ENCODE measurements at regions of chr5 and their contacts with region 1.

Region 1: GRCh38 chr5:40486437-40487275 is 193.1 kb upstream of the PTGER4 start:
- DNase-seq: peak; percentile 89
- H3K4me3 Mint-ChIP-seq: peak overlapping the region; percentile 45
- H3K27ac Mint-ChIP-seq: peak overlapping the region; percentile 89
- H3K4me1 Mint-ChIP-seq: peaks cover 55% of the 10 kb centered on the region
- H3K27me3 Mint-ChIP-seq: no peaks in the 10 kb centered on the region

Region 2: DNA sequence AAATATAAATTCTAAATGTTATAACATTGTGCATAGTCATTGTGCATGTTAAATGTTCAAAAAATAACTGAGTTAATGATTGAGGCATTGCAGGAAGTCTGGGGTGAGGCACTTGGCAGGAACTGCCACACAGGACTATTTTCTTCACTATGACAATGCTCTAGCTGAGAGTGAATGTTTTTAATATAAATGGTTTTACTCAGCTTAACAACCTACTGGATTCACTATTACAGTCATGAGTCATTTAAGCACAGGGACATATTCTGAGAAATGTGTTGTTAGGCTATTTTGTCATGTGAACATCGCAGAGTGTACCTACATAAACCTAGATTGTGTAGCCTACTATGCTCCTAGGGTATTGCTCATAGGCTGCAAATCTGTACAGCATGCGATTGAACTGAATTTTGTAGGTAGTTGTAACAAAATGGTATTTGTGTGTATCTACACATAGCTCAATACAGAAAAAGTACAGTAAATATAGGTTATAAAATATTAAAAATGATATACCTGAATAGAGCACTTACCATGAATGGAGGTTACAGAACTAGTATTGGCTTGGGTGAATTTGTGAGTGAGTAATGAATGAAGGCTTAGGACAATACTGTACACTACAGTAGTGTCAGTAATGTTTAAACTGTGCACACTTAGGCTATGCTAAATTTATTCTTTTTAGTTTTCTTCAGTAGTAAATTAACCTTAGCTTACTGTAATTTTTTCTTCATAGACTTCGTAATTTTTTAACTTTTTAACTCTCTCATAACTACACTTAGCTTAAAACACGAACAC is 153.0 kb before region 1 on chr5:
- intact Hi-C with region 1: loop called (anchors 1 kb)
- DNase-seq: peak; percentile 59
- H3K4me3 Mint-ChIP-seq: no peak overlapping the region
- H3K27ac Mint-ChIP-seq: no peak overlapping the region
- H3K4me1 Mint-ChIP-seq: peaks cover 19% of the 10 kb centered on the region
- H3K27me3 Mint-ChIP-seq: no peaks in the 10 kb centered on the region

Region 3: GRCh38 chr5:40404613-40405012 is 82.0 kb before region 1 on chr5:
- intact Hi-C with region 1: loop called (anchors 1 kb)
- DNase-seq: peak; percentile 80
- H3K4me3 Mint-ChIP-seq: peak overlapping the region; percentile 21
- H3K27ac Mint-ChIP-seq: peak overlapping the region; percentile 75
- H3K4me1 Mint-ChIP-seq: peaks cover 71% of the 10 kb centered on the region
- H3K27me3 Mint-ChIP-seq: no peaks in the 10 kb centered on the region

Region 4: DNA sequence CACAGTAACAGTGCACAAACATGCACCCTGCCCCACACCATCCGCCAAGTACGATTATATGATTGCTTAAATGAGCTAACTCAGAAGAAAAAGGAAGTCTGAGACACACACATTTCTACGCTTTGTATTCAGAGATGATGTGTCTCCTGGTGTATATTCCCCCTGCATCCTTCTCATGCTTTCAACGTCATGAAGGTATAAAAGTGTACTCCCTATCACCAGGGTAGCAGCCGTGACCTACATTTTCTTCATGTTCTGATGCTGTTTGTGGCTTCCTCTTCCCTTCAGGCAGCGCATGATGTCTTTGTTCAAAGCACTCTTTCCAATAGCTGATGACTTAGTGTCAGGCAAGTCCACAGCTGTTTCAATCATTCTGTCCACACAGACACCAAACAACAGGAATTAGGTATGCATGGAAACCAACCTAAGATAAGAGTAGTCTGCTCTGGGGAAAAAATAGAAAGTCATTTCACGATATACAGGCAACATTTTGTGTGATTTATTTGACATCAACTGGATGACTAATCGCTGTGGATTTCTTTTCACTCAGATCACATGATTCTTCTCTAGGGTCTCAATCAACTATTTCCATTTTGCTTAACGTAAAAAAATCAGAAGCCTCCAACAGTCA is 76.3 kb before region 1 on chr5:
- intact Hi-C with region 1: loop called (anchors 1 kb)
- DNase-seq: peak; percentile 93
- H3K4me3 Mint-ChIP-seq: peak overlapping the region; percentile 79
- H3K27ac Mint-ChIP-seq: peak overlapping the region; percentile 93
- H3K4me1 Mint-ChIP-seq: peaks cover 51% of the 10 kb centered on the region
- H3K27me3 Mint-ChIP-seq: no peaks in the 10 kb centered on the region

Region 5: DNA sequence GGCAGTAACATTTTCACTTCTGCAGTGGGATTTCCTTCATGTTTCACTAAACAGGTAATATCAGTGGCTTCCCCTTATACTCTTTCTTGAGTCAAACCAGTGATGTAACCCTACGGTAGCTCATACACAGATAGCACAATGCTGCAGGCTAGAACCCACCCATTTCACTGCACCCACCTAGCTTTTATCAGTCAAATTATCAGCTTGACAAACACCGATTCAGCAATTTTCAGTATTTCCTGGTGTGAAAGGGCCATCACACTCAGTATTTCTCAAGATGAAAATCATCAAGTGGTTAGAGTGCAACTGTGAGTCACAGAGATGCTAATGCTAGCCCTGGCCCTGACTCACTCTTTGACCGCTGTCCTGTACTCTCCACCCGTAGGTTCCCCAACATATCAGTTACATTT is 49.2 kb before region 1 on chr5:
- intact Hi-C with region 1: loop called (anchors 1 kb)
- DNase-seq: peak; percentile 66
- H3K4me3 Mint-ChIP-seq: peak overlapping the region; percentile 16
- H3K27ac Mint-ChIP-seq: peak overlapping the region; percentile 79
- H3K4me1 Mint-ChIP-seq: peaks cover 69% of the 10 kb centered on the region
- H3K27me3 Mint-ChIP-seq: no peaks in the 10 kb centered on the region

Region 6: GRCh38 chr5:40518511-40518967 is 31.9 kb after region 1 on chr5:
- intact Hi-C with region 1: no loop called
- DNase-seq: no peak
- H3K4me3 Mint-ChIP-seq: no peak overlapping the region
- H3K27ac Mint-ChIP-seq: peak overlapping the region; percentile 7
- H3K4me1 Mint-ChIP-seq: peaks cover 33% of the 10 kb centered on the region
- H3K27me3 Mint-ChIP-seq: no peaks in the 10 kb centered on the region